Cardiac septum (tissue), 1 donor: ENCODE measurements at regions of chr4 and their contacts with region 1.

Region 1: DNA sequence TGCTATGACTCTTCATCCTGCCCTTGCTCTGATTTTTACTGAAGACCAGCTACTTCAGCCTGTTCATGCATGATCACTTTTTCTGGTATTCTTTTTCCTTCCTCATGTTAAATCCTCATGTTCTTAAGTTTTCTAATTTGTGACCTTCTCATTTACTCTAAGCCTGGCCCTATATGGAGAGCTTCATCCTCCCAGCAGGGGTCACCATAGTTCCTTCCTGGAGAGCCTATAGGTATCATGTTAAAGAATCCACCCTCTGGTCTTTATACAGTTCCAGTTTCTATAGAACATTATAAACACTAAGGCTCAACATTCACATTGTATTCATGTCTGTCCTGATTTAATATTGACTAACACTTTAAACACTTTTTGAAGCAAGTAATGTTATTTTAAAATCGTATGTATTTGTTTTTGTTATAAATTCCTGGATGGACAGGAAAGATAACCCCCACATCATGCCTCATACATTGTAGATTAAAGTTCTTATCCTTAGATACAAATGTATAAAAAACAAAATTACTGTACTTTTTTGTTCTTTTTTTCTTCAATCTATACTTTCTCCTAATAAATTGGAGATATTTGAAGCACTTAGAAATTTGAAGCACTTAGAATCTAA is 53.8 kb upstream of the OTUD4 start:
- DNase-seq: no peak

Region 2: DNA sequence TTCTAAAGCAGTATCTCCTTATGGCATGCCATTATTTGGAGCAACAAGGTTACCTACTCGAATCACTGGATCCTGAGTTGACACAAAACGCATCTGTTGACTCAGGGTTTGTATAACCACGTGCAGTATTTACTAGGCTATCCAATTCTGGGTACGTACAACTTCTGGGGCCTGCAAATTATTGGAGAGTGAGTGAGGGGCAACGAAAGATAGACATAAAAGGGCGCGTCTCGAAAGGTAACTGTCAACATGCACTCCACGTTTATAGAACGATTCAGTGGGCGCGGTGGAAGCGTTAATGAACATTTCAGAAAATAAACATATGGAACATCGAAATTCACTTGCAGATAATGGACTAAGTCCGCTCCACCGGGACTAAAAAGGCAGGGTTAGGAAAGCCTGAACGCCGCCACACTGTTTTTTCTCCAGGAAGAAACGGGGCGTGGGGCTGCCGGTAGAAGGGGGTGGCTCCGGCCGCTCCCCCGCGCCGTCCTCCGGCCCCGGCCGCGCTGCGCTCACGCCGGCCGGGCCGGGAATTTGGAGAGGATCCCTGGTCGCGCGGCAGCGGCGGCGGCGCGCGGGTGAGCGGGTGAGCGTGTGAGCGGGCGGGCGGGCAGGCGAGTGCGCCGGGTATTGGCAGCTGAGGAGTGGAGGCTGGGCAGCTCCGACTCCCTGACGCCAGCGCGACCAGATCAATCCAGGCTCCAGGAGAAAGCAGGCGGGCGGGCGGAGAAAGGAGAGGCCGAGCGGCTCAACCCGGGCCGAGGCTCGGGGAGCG is 247.2 kb after region 1 on chr4 and contains the start of gene SMAD1:
- intact Hi-C with region 1: loop called (anchors 10 kb)
- DNase-seq: peak; percentile 91
- total RNA-seq, gene SMAD1: 10.8 TPM

Region 3: DNA sequence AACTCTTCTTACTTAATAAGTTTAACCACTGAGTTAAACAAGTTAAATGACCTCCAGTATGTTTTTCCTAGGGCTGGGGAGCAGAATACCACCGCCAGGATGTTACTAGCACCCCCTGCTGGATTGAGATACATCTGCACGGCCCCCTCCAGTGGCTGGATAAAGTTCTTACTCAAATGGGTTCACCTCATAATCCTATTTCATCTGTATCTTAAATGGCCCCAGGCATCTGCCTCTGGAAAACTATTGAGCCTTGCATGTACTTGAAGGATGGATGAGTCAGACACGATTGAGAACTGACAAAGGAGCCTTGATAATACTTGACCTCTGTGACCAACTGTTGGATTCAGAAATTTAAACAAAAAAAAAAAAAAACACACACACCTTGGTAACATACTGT is 323.5 kb after region 1 on chr4:
- intact Hi-C with region 1: loop called (anchors 2 kb)
- DNase-seq: no peak

Region 4: DNA sequence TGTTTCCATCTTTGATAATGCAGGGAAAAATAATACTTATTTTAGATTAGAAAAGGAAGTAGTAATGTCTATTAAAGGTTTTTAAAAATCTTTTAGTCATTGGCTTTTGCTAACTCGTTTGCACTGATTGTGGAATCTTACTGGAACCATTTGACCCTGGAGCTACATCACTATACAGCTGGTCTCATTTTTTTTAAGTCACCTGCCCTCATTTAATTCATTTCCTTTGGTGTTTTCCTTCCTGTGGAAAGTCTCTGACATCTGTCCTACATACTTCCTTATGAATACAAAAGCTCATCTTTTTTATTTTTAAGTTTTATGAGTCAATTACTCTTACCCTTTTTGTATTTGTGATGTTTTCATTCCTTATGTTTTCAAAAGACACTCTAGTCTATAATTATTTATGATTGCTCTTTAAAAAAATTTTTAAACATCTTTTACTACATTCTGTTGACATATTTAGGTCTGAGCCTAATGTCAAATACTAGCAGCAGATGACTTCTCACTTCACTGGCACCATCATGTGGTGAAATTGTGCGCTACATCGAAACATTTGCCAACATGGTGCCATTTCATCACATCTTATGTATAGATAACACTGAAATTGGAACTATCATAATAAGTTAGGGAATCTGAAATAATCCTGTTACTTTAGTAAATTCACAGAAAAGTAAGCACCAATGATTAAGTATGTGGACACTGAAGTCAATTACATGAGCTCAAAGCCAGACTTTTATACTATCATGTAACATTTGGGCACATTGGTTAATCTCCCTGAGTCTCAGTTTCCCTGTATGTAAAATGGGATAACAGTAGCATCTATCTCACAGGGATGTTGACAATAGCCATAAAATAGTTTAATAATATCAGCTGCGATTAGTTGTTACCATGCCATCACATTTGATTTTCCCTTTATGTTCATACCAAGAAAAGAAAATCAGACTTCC is 375.6 kb after region 1 on chr4:
- intact Hi-C with region 1: loop called (anchors 2 kb)
- DNase-seq: no peak